Activated T-helper 2 cell treated with anti-CD3 and anti-CD28 coated beads, Interferon-gamma antibody, Interleukin-2, Interleukin-4, amounts not matched to agents 10 μg/mL and 5 μg/mL and 100 μg/mL, durations not matched to agents 14 hours and 24 hours and 36 hours (primary cell): ENCODE measurements at regions of chr19 and their contacts with region 1.

Region 1: GRCh38 chr19:19643158-19644053 is at the start of gene GMIP:
- DNase-seq: peak; percentile 82
- H3K4me3 Mint-ChIP-seq: peak within 1 kb of the TSS; percentile 93
- H3K27ac Mint-ChIP-seq: peak within 1 kb of the TSS; percentile 94
- H3K4me1 Mint-ChIP-seq: peaks cover 12% of the 10 kb centered on the region
- H3K27me3 Mint-ChIP-seq: no peaks in the 10 kb centered on the region
- total RNA-seq, gene GMIP: 66.0 and 67.5 TPM in 2 replicates

Region 2: GRCh38 chr19:19531951-19532805 is 111.2 kb before region 1 on chr19:
- intact Hi-C with region 1: loop called (anchors 1 kb)
- DNase-seq: peak; percentile 76
- H3K4me3 Mint-ChIP-seq: no peak overlapping the region
- H3K27ac Mint-ChIP-seq: no peak overlapping the region
- H3K4me1 Mint-ChIP-seq: peaks cover 4% of the 10 kb centered on the region
- H3K27me3 Mint-ChIP-seq: peaks cover 5% of the 10 kb centered on the region

Region 3: DNA sequence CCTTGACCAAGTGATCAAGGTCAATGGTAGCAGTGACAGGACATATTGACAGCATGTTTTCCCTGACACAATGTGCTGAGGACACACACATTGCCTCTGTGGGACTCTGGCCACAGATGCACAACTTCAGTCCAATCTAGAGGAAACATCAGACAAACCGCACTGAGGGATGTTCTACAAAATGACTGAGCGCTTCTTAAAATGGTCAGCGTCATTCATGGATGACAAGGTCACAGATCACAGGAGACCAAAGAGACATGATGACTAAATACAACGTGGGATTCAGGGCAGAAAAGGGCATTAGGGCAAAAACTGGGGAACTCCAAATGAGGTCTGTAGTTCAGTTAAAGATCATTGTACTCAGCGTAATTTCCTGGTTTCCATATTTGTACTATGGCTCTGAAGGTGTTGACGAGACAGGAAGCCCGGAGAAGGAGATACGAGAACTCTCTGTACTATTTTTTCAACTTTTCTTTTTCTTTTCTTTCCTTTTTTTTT is 45.5 kb before region 1 on chr19:
- intact Hi-C with region 1: loop called (anchors 1 kb)
- DNase-seq: peak; percentile 70
- H3K4me3 Mint-ChIP-seq: peak overlapping the region; percentile 73
- H3K27ac Mint-ChIP-seq: peak overlapping the region; percentile 99
- H3K4me1 Mint-ChIP-seq: peaks cover 59% of the 10 kb centered on the region
- H3K27me3 Mint-ChIP-seq: no peaks in the 10 kb centered on the region

Region 4: DNA sequence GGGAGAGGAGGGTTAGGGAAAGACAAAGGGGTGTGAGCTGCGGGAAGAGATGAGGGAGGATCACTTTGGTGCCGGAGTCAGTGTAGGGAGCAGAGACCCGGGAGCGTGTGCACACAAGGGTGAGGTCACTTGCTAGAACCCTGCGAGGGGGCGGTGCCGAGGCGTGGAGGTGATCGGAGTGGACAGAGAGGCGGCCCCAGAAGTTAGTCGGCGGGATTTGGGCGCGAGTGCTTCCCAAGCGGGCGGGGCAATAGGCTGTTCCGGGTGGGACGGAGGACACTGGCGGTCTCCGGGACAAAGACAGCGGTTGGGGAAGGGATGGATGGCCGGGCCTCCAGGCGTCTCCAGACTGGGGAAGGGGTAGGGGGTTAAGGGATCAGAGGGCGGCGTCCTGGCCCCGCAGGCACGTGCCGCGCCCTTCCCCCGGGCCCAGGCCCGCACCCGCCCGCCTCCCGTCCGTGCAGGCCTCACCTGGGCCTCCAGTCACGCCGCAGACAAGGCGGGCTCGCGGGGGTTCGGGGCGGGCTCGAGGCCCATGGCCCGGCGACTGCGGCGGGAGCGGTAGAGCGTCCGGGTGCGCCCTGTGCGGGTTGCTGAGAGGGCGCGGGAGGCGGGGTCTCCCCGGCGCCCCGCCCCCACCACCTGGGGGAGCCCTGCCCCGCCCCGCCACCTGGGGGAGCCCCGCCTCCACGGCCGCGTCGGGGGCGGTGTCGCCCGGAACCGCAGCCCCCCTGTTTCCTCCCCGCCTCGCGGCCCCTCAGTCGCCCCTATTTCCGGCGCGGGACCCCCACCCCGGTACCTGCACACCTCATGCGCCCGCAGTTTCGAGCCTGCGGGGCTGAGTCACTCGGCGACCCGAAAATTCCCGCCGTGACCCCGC is 15.5 kb before region 1 on chr19 and contains the start of gene LPAR2:
- intact Hi-C with region 1: loop called (anchors 2 kb)
- DNase-seq: peak; percentile 56
- H3K4me3 Mint-ChIP-seq: peak within 1 kb of the TSS; percentile 92
- H3K27ac Mint-ChIP-seq: peak within 1 kb of the TSS; percentile 87
- H3K4me1 Mint-ChIP-seq: peaks cover 18% of the 10 kb centered on the region
- H3K27me3 Mint-ChIP-seq: no peaks in the 10 kb centered on the region
- total RNA-seq, gene LPAR2: 28.9 and 29.8 TPM in 2 replicates